Right ventricle myocardium inferior (tissue), 1 donor: ENCODE measurements at regions of chr16 and their contacts with region 1.

Region 1: DNA sequence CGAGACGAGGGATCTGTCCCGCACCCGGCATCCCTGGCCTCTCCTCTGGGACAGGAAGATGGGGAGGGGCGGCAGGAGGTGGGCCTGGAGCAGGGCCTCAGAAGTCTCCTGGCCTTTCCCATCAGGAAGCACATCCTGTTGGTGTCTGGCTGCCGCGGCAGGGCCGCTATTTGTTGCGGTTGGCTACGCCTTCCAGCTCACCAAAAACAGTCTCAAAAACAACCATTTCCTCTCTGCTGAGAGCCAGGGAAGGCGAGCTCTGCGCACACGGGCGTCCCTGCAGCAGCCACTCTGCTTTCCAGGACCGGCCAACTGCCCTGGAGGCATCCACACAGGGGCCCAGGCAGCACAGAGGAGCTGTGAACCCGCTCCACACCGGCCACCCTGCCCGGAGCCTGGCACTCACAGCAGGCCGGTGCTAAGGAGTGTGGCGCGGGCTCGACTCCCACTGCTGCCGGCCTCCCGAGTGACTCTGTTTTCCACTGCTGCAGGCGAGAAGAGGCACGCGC is at the start of gene TMEM204:
- DNase-seq: peak; percentile 87
- ATAC-seq: peak; percentile 65
- total RNA-seq, gene TMEM204: 30.7 TPM

Region 2: GRCh38 chr16:1511662-1512575 is 21.6 kb before region 1 on chr16:
- intact Hi-C with region 1: loop called (anchors 2 kb)
- DNase-seq: peak; percentile 37
- ATAC-seq: no peak

Region 3: GRCh38 chr16:1545044-1546040 is 11.8 kb after region 1 on chr16:
- intact Hi-C with region 1: loop called (anchors 1 kb)
- DNase-seq: peak; percentile 82
- ATAC-seq: peak; percentile 81

Region 4: GRCh38 chr16:1579201-1579600 is 45.7 kb after region 1 on chr16:
- intact Hi-C with region 1: no loop called
- DNase-seq: no peak
- ATAC-seq: no peak